ENCODE measurements at regions of chr16 and their contacts with region 1.

Region 1: GRCh38 chr16:23435500-23435899 is 17.5 kb downstream of the COG7 start:
- DNase-seq: peak; percentile 78
- ATAC-seq: peak; percentile 94
- H3K4me3 Mint-ChIP-seq: no peak overlapping the region
- H3K27ac Mint-ChIP-seq: no peak overlapping the region
- H3K4me1 Mint-ChIP-seq: peaks cover 4% of the 10 kb centered on the region
- H3K27me3 Mint-ChIP-seq: no peaks in the 10 kb centered on the region

Region 2: DNA sequence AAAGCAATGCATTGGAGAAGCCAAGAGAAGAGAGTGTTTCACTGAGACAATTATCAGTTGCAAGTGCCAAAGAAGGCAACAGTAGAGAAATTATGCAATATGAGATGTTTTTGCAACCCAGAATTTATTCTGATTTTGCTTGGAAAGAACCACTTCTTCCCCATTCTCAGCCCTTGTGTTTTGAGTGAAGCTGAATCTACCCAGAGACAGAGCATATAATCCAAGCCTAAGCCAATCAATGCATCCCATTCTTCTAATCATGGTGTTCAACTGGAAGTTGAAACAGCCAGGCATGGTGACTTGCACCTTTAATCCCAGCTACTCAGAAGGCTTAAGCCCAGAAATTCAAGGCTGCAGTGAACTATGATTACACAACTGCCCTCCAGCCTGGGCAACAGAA is 259.8 kb before region 1 on chr16:
- CTCF ChIA-PET with region 1: interaction called, 81 read pairs
- DNase-seq: no peak
- ATAC-seq: no peak
- H3K4me3 Mint-ChIP-seq: no peak overlapping the region
- H3K27ac Mint-ChIP-seq: no peak overlapping the region
- H3K4me1 Mint-ChIP-seq: no peaks in the 10 kb centered on the region
- H3K27me3 Mint-ChIP-seq: peaks cover 44% of the 10 kb centered on the region

Region 3: GRCh38 chr16:23423496-23424049 is 11.9 kb before region 1 on chr16:
- CTCF ChIA-PET with region 1: interaction called, 16 read pairs
- DNase-seq: no peak
- ATAC-seq: no peak
- H3K4me3 Mint-ChIP-seq: no peak overlapping the region
- H3K27ac Mint-ChIP-seq: no peak overlapping the region
- H3K4me1 Mint-ChIP-seq: peaks cover 2% of the 10 kb centered on the region
- H3K27me3 Mint-ChIP-seq: no peaks in the 10 kb centered on the region

Region 4: GRCh38 chr16:23504451-23505179 is 69.1 kb after region 1 on chr16:
- CTCF ChIA-PET with region 1: interaction called, 22 read pairs
- DNase-seq: peak; percentile 97
- ATAC-seq: peak; percentile 89
- H3K4me3 Mint-ChIP-seq: peak overlapping the region; percentile 34
- H3K27ac Mint-ChIP-seq: peak overlapping the region; percentile 71
- H3K4me1 Mint-ChIP-seq: peaks cover 76% of the 10 kb centered on the region
- H3K27me3 Mint-ChIP-seq: no peaks in the 10 kb centered on the region

Region 5: DNA sequence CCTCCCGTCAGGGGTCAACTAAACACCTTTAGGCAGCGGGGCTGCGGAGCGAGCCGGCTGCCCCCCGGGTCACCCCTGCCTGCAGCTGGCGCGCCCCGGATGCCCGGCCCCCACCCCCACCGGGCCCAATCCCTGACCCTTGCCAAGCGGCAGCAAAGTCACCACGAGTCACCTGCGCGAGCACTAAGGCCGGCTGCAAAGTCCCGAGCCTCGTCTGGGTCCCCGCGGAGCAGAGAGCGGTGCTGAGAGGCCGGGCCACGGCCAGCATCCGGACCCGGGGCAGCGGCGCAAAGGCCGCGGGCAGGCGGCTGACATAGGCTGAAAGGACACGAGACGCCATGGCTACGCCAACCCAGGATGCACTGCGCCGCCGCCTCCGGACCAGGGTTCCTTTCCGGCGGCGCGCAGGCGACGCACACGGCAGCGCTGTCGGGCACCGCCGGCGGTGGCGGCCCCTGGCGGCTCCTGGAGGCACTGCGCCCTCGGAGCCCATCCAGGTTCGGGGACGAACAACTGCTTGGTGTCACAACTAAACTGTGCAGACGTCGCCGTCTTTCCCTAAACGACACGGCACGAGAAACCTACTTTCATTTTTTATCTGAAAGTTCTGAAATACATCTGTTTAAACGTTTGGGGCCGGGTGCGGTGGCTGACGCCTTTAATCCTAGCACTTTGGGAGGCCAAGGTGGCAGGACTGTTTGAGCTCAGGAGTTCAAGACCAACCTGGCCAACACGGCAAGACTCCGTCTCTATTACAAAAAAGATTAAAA is 160.6 kb after region 1 on chr16 and contains the start of gene NDUFAB1:
- CTCF ChIA-PET with region 1: interaction called, 17 read pairs
- DNase-seq: peak; percentile 93
- ATAC-seq: peak; percentile 99
- H3K4me3 Mint-ChIP-seq: peak within 1 kb of the TSS; percentile 80
- H3K27ac Mint-ChIP-seq: peak within 1 kb of the TSS; percentile 82
- H3K4me1 Mint-ChIP-seq: peaks cover 21% of the 10 kb centered on the region
- H3K27me3 Mint-ChIP-seq: no peaks in the 10 kb centered on the region
- total RNA-seq, gene NDUFAB1: 90.2 to 111 TPM

Measured in activated CD8-positive, alpha-beta memory T cell treated with anti-CD3 and anti-CD28 coated beads, Interleukin-2, amount 10 ng/mL, durations not matched to agents 7 days and 5 days (primary cell).